CD4-positive, alpha-beta memory T cell (primary cell): ENCODE measurements at regions of chr3 and their contacts with region 1.

Region 1: DNA sequence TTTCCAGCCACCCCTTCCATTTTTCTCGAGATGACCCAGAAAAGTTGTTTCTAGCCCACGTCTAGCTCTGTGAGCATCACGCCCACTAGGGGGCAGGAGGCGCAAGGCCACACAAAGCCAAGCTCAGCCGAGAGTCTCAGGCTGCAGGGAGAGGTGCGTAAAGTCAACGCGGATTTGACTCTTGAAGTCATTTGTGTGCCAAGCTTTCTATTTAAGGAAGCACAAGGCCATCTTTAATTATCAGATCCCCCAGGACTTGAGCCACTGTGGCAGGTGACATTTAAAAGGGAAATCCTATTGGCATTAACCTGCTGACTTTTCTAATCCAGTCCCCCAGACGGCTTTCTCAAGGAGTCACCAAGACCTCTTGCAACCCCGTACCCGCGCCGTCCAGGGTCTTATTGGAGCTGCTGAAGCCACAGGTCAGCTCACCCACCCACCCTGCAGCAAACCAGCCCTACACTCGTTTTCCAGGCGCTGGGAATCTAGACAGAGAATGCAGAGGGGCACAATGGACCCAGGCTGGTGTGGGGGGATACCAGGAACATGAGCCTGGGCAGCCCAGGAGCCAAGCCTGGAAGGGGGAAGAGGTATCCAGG is 62.1 kb downstream of the CAPN7 start:
- DNase-seq: peak; percentile 82 to 85 (median 83)
- H3K4me3 ChIP-seq: no peak overlapping the region
- H3K4me3 Mint-ChIP-seq: peak overlapping the region in 7 of 8 donors; percentile 24 to 86 (median 60)
- H3K27ac ChIP-seq: peak overlapping the region; percentile 65
- H3K27ac Mint-ChIP-seq: peak overlapping the region; percentile 35 to 96 (median 87)
- H3K4me1 ChIP-seq: peaks cover 88% of the 10 kb centered on the region
- H3K4me1 Mint-ChIP-seq: peaks cover 50 to 93% (median 77%) of the 10 kb centered on the region in 4 donors
- H3K27me3 ChIP-seq: no peaks in the 10 kb centered on the region
- H3K27me3 Mint-ChIP-seq: no peaks in the 10 kb centered on the region

Region 2: GRCh38 chr3:15256861-15257341 is 11.2 kb before region 1 on chr3:
- CTCF ChIA-PET with region 1: interaction called, 31 read pairs
- POLR2A ChIA-PET with region 1: interaction called, 16 read pairs
- intact Hi-C with region 1: no loop called
- DNase-seq: no peak
- H3K4me3 ChIP-seq: no peak overlapping the region
- H3K4me3 Mint-ChIP-seq: peak overlapping the region in 1 of 8 donors; percentile 31
- H3K27ac ChIP-seq: no peak overlapping the region
- H3K27ac Mint-ChIP-seq: peak overlapping the region in 6 of 7 donors; percentile 8 to 83 (median 58)
- H3K4me1 ChIP-seq: no peaks in the 10 kb centered on the region
- H3K4me1 Mint-ChIP-seq: peaks cover 6 to 38% (median 11%) of the 10 kb centered on the region in 4 donors
- H3K27me3 ChIP-seq: no peaks in the 10 kb centered on the region
- H3K27me3 Mint-ChIP-seq: no peaks in the 10 kb centered on the region

Region 3: DNA sequence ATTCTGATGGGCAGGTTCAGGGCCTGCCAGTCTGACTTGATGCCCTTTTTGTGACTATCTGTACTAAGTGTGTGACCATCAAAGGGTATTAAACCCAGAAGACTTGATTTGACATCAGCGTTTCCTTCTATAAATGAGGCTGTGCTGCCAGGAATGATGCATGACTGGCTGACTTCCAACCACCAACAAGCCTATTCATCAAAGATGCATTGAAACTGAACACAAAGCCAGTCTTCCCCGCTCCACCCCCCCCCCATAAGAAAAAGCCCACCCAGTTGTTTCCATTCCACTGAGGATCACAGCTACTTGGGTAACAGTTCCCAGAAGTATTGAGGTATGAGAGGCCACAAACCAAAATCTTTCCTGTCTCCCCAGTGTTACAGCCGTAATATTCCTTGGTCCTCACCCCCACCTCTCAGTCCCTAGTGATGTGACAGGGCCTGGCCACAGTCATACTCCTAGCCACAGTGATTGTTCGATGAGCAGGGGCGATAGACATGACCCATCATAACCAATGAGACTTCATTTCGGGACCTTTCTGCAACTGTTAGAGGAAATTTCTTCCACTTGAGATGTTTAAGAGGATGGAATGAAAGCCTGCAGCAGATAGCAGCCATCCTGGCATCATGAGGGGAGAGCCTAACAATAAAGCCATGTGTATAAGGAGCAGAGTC is 41.7 kb after region 1 on chr3:
- CTCF ChIA-PET with region 1: interaction called, 17 read pairs
- POLR2A ChIA-PET with region 1: interaction called, 14 read pairs
- intact Hi-C with region 1: loop called (anchors 1 kb)
- DNase-seq: no peak
- H3K4me3 ChIP-seq: no peak overlapping the region
- H3K4me3 Mint-ChIP-seq: peak overlapping the region in 7 of 8 donors; percentile 25 to 77 (median 56)
- H3K27ac ChIP-seq: peak overlapping the region; percentile 11
- H3K27ac Mint-ChIP-seq: peak overlapping the region; percentile 63 to 84 (median 80)
- H3K4me1 ChIP-seq: peaks cover 89% of the 10 kb centered on the region
- H3K4me1 Mint-ChIP-seq: peaks cover 55 to 86% (median 69%) of the 10 kb centered on the region in 4 donors
- H3K27me3 ChIP-seq: no peaks in the 10 kb centered on the region
- H3K27me3 Mint-ChIP-seq: no peaks in the 10 kb centered on the region

Region 4: DNA sequence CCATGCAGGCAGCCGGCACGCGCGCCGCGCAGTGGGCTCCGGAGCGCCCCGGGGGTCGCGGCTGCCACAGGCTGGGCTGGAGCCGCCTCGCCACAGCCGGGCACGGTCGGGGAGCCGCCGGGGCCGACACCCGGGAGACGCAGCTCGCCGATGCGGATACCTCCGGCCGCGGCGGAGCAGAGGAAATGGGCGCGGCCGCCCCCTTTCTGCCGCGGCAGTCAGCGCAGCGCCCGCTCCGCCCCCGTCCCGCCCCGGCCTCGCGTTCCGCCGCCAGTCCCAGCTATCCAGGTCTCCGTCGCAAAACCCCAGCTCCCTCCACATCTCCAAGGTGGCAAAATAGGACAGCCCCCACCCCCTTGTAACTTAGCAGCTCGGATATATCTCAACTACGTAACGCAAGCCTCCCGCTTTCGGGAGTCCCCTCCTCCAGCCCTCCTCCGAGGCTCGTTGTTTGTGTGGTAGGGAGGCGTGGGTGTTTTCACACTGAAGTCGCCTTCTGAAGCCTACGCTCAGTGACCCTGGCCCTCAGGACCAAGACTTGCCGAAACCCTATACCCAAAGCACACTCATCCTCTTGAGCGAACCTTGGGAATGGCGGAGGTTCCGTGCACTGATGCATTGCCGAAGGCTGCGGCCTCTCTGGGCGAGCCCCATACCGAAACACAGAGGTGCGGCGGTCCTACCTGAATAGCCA is 64.4 kb after region 1 on chr3 and contains the start of gene SH3BP5:
- CTCF ChIA-PET with region 1: interaction called, 203 read pairs
- POLR2A ChIA-PET with region 1: interaction called, 108 read pairs
- intact Hi-C with region 1: loop called (anchors 1 kb)
- DNase-seq: peak; percentile 69 to 79 (median 74)
- H3K4me3 ChIP-seq: peak within 1 kb of the TSS; percentile 39 to 97
- H3K4me3 Mint-ChIP-seq: peak within 1 kb of the TSS; percentile 91 to 98 (median 98)
- H3K27ac ChIP-seq: peak within 1 kb of the TSS; percentile 79
- H3K27ac Mint-ChIP-seq: peak within 1 kb of the TSS; percentile 94 to 96 (median 94)
- H3K4me1 ChIP-seq: peaks cover 54% of the 10 kb centered on the region
- H3K4me1 Mint-ChIP-seq: peaks cover 35 to 64% (median 53%) of the 10 kb centered on the region in 4 donors
- H3K27me3 ChIP-seq: no peaks in the 10 kb centered on the region
- H3K27me3 Mint-ChIP-seq: no peaks in the 10 kb centered on the region
- total RNA-seq, gene SH3BP5: 55.8 to 56.9 TPM

Region 5: DNA sequence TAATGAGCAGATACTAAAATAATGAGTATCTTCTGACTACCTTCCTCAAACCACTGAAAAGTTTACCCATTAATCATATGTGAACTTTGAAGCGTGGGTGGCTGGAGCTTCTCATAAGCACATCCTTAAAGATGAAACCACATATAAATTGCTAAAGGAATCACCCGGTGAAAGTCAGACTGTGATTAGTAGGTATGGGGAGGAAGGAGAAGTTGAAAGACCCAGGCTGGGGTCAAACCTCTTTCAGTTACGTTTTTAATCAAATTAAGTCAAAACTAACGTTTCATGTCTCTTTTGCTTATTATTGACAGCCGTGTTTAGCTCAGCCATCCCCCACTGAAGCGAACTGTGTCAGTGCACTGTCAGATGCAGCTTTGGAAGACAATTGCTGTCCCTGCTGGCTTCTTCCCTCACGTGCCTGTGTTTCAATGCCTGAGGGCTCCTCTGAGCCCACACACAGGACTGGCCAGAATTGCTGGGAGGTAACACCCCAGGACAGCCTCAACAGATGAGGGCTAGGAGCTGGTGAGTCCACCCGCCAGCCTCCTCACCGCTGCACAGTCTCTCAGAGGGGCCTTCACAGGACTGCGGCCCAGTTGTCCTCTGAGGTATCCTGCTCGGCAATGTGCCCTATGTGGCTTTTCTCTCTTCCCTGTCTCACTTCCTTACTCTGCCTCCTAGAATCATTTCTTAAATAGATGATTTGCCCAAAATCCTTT is 93.5 kb after region 1 on chr3:
- CTCF ChIA-PET with region 1: interaction called, 41 read pairs
- POLR2A ChIA-PET with region 1: interaction called, 7 read pairs
- intact Hi-C with region 1: loop called (anchors 1 kb)
- DNase-seq: peak in 1 of 5 donors; percentile 39
- H3K4me3 ChIP-seq: no peak overlapping the region
- H3K4me3 Mint-ChIP-seq: peak overlapping the region in 7 of 8 donors; percentile 56 to 92 (median 73)
- H3K27ac ChIP-seq: peak overlapping the region; percentile 36
- H3K27ac Mint-ChIP-seq: peak overlapping the region; percentile 86 to 93 (median 89)
- H3K4me1 ChIP-seq: peaks cover 54% of the 10 kb centered on the region
- H3K4me1 Mint-ChIP-seq: peaks cover 28 to 59% (median 37%) of the 10 kb centered on the region in 4 donors
- H3K27me3 ChIP-seq: no peaks in the 10 kb centered on the region
- H3K27me3 Mint-ChIP-seq: no peaks in the 10 kb centered on the region

Region 6: GRCh38 chr3:15405448-15406050 is 137.4 kb after region 1 on chr3:
- CTCF ChIA-PET with region 1: interaction called, 130 read pairs
- POLR2A ChIA-PET with region 1: interaction called, 14 read pairs
- intact Hi-C with region 1: loop called (anchors 1 kb)
- DNase-seq: peak; percentile 49 to 61 (median 55)
- H3K4me3 ChIP-seq: no peak overlapping the region
- H3K4me3 Mint-ChIP-seq: no peak overlapping the region
- H3K27ac ChIP-seq: no peak overlapping the region
- H3K27ac Mint-ChIP-seq: peak overlapping the region in 4 of 7 donors; percentile 8 to 40 (median 24)
- H3K4me1 ChIP-seq: peaks cover 3% of the 10 kb centered on the region
- H3K4me1 Mint-ChIP-seq: peaks cover 7 to 22% (median 14%) of the 10 kb centered on the region in 4 donors
- H3K27me3 ChIP-seq: no peaks in the 10 kb centered on the region
- H3K27me3 Mint-ChIP-seq: no peaks in the 10 kb centered on the region

Region 7: GRCh38 chr3:15815696-15816095 is 547.6 kb after region 1 on chr3:
- CTCF ChIA-PET with region 1: no interaction called
- POLR2A ChIA-PET with region 1: no interaction called
- intact Hi-C with region 1: no loop called
- DNase-seq: peak in 3 of 5 donors; percentile 34 to 42 (median 36)
- H3K4me3 ChIP-seq: no peak overlapping the region
- H3K4me3 Mint-ChIP-seq: no peak overlapping the region
- H3K27ac ChIP-seq: no peak overlapping the region
- H3K27ac Mint-ChIP-seq: no peak overlapping the region
- H3K4me1 ChIP-seq: peaks cover 29% of the 10 kb centered on the region
- H3K4me1 Mint-ChIP-seq: peaks cover 22 to 55% (median 27%) of the 10 kb centered on the region in 4 donors
- H3K27me3 ChIP-seq: no peaks in the 10 kb centered on the region
- H3K27me3 Mint-ChIP-seq: no peaks in the 10 kb centered on the region